Dorsolateral prefrontal cortex (tissue), 120 donors: ENCODE measurements at regions of chr15 and their contacts with region 1.

Region 1: DNA sequence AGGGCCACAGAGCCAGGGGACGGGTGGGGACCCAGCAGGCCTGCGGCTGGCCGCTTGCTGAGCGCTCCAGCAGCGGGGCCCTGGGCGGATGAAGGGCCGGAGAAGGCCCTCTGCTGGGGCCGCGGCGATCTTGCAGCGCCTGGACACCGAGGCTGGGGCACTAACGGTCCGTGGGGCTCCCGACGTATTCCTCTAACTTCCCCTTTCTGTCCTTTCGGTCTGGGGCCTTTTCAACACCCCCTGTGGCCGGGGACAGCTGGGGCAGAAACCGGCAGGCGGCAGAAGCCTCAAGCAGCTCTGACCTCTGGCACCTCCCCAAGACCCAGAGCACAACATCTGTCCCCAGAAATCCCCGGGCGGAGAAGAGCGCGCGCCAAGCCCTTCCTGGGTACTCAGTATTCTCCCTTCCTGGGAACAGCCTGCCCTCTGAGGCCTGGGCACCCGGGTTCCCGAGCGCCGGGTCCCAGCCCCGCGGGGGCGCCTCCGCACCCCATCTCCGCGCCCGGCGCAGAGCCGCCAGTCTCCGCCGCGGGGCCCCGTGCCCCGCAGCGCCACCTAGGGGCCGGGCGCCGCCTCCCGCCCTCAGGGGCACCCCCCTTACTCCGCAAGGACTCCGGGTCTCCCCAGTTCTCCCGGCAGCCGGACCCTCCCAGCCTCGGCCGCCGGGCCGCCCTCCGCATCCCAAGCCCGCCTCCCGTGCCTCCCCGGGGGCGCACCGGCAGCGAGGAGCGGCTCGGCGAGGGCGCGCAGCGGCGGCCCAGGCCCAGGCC is 582 bp upstream of the SLCO3A1 start:
- DNase-seq: peak; percentile 62 to 86 (median 78)
- H3K4me3 ChIP-seq: peak overlapping the region; percentile 55 to 86 (median 74)
- H3K27ac ChIP-seq: peak overlapping the region; percentile 40 to 99 (median 97)
- H3K27me3 ChIP-seq: no peaks in the 10 kb centered on the region
- CTCF ChIP-seq: peak; percentile 24 to 95 (median 67)

Region 2: GRCh38 chr15:91522663-91523332 is 330.1 kb before region 1 on chr15:
- intact Hi-C with region 1: loop called in 1 of 2 experiments (anchors 2 kb)
- DNase-seq: peak in 1 of 10 donors; percentile 26
- H3K4me3 ChIP-seq: no peak overlapping the region
- H3K27ac ChIP-seq: peak overlapping the region in 46 of 59 donors; percentile 3 to 85 (median 56)
- H3K27me3 ChIP-seq: no peaks in the 10 kb centered on the region
- CTCF ChIP-seq: peak in 55 of 56 donors; percentile 47 to 85 (median 69)

Region 3: GRCh38 chr15:91706322-91707032 is 146.4 kb before region 1 on chr15:
- intact Hi-C with region 1: loop called (anchors 2 to 5 kb)
- DNase-seq: peak; percentile 50 to 88 (median 78)
- H3K4me3 ChIP-seq: peak overlapping the region in 3 of 59 donors; percentile 5 to 18 (median 10)
- H3K27ac ChIP-seq: peak overlapping the region in 49 of 59 donors; percentile 1 to 78 (median 60)
- H3K27me3 ChIP-seq: no peaks in the 10 kb centered on the region
- CTCF ChIP-seq: peak; percentile 62 to 95 (median 89)

Region 4: DNA sequence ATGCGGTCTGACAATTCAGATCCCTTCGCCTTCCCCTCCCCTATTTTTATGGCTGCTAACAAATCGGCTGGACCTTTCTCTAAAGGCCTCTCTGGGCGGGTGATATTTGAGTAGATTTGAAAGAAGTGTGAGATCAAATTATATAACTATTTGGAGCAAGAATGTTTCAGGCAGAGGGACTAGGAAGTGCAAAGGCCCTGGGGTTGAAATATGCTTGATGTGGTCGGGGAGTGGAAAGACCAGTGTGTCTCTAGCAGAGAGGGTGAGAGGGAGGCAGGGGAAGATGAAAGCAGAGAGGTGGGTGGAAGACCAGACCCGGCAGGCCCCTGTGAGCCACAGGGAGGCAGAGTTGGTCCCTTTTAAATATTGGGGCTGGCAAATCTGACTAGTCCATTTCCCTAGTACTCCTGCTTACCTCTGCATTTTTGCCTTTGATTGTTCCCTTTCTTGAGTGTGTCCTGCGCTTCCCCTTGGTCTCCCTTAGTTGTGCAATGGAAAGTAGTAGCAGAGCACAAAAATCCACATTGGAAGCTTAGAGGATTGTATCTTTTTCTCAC is 32.9 kb after region 1 on chr15:
- intact Hi-C with region 1: loop called (anchors 2 to 5 kb)
- DNase-seq: no peak
- H3K4me3 ChIP-seq: no peak overlapping the region
- H3K27ac ChIP-seq: peak overlapping the region in 58 of 59 donors; percentile 76 to 99 (median 94)
- H3K27me3 ChIP-seq: no peaks in the 10 kb centered on the region
- CTCF ChIP-seq: peak in 22 of 56 donors; percentile 0 to 34 (median 20)

Region 5: DNA sequence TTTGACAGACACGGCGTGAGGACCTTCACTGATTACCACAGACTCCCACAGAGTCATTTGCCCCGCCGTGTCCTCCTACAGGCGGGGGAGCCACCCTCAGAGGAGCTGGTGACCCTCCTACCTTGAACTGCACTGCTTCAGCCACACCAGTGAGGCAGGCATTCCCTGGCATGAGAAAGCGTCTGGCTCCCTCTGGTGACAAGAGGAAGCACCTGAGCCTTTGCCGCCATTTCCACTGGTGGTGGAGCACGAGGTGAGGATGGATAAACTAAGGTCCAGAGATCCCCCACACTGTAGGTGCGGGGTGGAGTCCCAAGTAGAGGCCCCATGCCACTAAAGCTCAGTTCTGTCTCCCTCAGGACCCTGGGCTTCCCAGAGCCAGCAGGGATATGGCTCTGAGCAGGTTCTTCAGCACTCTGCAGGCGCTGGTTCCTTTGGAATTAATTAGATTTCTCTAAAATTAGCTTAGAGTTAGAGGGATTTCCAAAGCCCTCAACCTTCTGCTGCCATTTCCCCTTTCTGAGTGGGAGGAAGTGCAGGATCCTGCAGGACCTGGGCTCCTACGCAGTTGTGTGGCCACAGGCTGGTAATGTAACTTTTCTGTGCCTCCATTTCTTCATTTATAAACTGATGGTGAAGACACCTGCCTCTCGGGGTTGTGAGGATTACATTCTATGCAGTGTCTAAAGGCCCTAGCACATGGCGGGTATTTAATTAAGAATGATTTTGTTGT is 224.6 kb after region 1 on chr15:
- intact Hi-C with region 1: loop called (anchors 2 kb)
- DNase-seq: peak; percentile 62 to 85 (median 79)
- H3K4me3 ChIP-seq: no peak overlapping the region
- H3K27ac ChIP-seq: peak overlapping the region in 13 of 59 donors; percentile 4 to 54 (median 44)
- H3K27me3 ChIP-seq: no peaks in the 10 kb centered on the region
- CTCF ChIP-seq: peak in 55 of 56 donors; percentile 58 to 90 (median 77)